ENCODE measurements at regions of chr5 and their contacts with region 1.

Region 1: DNA sequence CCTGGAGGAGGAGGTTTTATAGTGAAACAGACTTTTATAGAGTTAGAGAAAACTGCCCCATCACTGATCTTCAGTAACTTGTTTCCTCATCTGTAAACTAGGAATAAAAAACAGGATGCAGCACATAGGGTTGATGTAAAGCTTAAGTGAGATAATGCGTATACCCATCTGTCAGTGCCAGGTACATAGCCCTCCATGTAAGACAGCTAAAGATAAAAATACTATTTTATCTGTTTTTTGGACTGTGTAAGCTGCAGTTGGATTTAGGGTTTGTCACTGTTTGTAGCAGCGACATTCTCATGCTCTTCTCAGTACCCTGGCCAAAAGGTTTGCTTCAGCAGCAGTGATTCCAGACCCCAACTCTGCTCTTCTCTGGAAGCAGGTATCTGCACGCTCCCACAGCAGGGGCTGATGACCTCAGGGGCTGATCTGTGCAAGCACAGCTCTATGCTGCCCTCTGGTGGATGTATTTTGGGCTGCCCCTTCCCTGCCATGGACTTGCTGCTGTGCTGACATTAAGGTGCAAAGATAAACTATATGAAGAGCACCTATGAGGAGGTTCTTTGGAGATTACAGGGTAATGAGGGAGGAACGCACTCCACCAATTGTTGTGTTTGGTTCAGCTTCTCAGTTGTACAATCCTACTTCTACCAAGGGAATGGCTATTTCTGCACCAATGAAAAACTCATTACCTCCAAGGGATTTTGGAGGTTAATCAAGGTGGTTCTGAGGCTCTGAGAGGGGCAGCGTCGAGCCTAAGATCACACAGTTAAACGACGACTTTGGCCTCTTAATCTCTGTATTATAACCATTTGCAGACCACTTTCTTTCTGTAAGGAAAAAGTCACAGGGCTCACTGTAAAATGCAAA is 13.1 kb downstream of the HMHB1 start:
- DNase-seq: peak; percentile 89
- H3K4me3 Mint-ChIP-seq: no peak overlapping the region
- H3K27ac Mint-ChIP-seq: no peak overlapping the region
- H3K4me1 Mint-ChIP-seq: peaks cover 22% of the 10 kb centered on the region
- H3K27me3 Mint-ChIP-seq: peaks cover 3% of the 10 kb centered on the region

Region 2: GRCh38 chr5:143002459-143003328 is 822.4 kb before region 1 on chr5:
- CTCF ChIA-PET with region 1: interaction called, 40 read pairs
- POLR2A ChIA-PET with region 1: no interaction called
- intact Hi-C with region 1: loop called (anchors 2 kb)
- DNase-seq: peak; percentile 79
- H3K4me3 Mint-ChIP-seq: peak overlapping the region; percentile 52
- H3K27ac Mint-ChIP-seq: peak overlapping the region; percentile 91
- H3K4me1 Mint-ChIP-seq: peaks cover 56% of the 10 kb centered on the region
- H3K27me3 Mint-ChIP-seq: no peaks in the 10 kb centered on the region

Region 3: GRCh38 chr5:143222287-143223231 is 602.5 kb before region 1 on chr5:
- CTCF ChIA-PET with region 1: no interaction called
- POLR2A ChIA-PET with region 1: no interaction called
- intact Hi-C with region 1: loop called (anchors 5 kb)
- DNase-seq: peak; percentile 75
- H3K4me3 Mint-ChIP-seq: peak overlapping the region; percentile 11
- H3K27ac Mint-ChIP-seq: peak overlapping the region; percentile 69
- H3K4me1 Mint-ChIP-seq: peaks cover 51% of the 10 kb centered on the region
- H3K27me3 Mint-ChIP-seq: no peaks in the 10 kb centered on the region

Region 4: DNA sequence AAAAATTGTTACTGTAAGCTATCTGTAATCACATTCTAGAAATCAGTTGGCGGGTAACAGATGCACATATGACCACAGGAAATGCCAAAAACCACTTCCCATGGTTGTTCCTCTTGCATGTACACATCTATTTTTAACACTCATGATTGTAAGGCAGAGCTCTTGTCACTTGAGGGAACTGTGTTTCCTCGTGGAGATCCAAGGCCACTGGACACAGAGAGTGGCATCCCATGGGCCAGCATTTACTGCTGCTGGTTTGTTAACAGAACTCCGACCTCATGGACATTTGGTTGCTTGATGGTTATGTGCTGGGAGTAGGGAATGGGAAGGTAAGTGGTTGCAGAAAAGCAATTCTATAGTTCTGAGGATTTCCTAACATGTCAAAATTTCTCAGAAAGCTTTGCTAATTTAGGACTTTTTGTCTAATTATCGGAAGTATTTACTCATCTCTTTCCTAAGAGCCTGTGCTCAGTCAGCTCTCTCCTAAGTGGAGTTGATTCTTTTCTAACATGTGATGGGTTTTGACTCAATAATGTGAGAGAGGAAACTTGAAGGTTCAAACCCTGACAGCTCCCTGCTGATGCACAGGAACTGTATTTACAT is 219.6 kb before region 1 on chr5:
- CTCF ChIA-PET with region 1: interaction called, 3 read pairs
- POLR2A ChIA-PET with region 1: no interaction called
- intact Hi-C with region 1: loop called (anchors 2 kb)
- DNase-seq: peak; percentile 52
- H3K4me3 Mint-ChIP-seq: peak overlapping the region; percentile 28
- H3K27ac Mint-ChIP-seq: peak overlapping the region; percentile 86
- H3K4me1 Mint-ChIP-seq: peaks cover 34% of the 10 kb centered on the region
- H3K27me3 Mint-ChIP-seq: peaks cover 3% of the 10 kb centered on the region

Region 5: GRCh38 chr5:143837306-143837848 is 12.3 kb after region 1 on chr5:
- CTCF ChIA-PET with region 1: interaction called, 10 read pairs
- POLR2A ChIA-PET with region 1: no interaction called
- intact Hi-C with region 1: no loop called
- DNase-seq: no peak
- H3K4me3 Mint-ChIP-seq: no peak overlapping the region
- H3K27ac Mint-ChIP-seq: no peak overlapping the region
- H3K4me1 Mint-ChIP-seq: no peaks in the 10 kb centered on the region
- H3K27me3 Mint-ChIP-seq: no peaks in the 10 kb centered on the region